Ascending aorta (tissue), 2 donors: ENCODE measurements at regions of chr3 and their contacts with region 1.

Region 1: GRCh38 chr3:11671648-11672100 is 28.0 kb upstream of the VGLL4 start:
- DNase-seq: no peak
- H3K4me3 ChIP-seq: peak overlapping the region in 1 of 2 donors; percentile 34
- H3K27ac ChIP-seq: peak overlapping the region; percentile 36 to 68
- H3K4me1 ChIP-seq: peaks cover 16 to 50% of the 10 kb centered on the region in 2 donors
- H3K27me3 ChIP-seq: no peaks in the 10 kb centered on the region
- CTCF ChIP-seq: no peak

Region 2: GRCh38 chr3:11367143-11367693 is 304.5 kb before region 1 on chr3:
- intact Hi-C with region 1: no loop called
- DNase-seq: peak in 1 of 2 donors; percentile 70
- H3K4me3 ChIP-seq: no peak overlapping the region
- H3K27ac ChIP-seq: peak overlapping the region; percentile 57 to 58
- H3K4me1 ChIP-seq: peaks cover 0 to 7% of the 10 kb centered on the region in 2 donors
- H3K27me3 ChIP-seq: no peaks in the 10 kb centered on the region
- CTCF ChIP-seq: no peak

Region 3: GRCh38 chr3:11719406-11720230 is 47.9 kb after region 1 on chr3:
- intact Hi-C with region 1: loop called (anchors 2 kb)
- DNase-seq: peak; percentile 16 to 83
- H3K4me3 ChIP-seq: peak overlapping the region; percentile 70 to 93
- H3K27ac ChIP-seq: peak overlapping the region; percentile 84 to 98
- H3K4me1 ChIP-seq: peaks cover 0 to 14% of the 10 kb centered on the region in 2 donors
- H3K27me3 ChIP-seq: no peaks in the 10 kb centered on the region
- CTCF ChIP-seq: no peak

Region 4: DNA sequence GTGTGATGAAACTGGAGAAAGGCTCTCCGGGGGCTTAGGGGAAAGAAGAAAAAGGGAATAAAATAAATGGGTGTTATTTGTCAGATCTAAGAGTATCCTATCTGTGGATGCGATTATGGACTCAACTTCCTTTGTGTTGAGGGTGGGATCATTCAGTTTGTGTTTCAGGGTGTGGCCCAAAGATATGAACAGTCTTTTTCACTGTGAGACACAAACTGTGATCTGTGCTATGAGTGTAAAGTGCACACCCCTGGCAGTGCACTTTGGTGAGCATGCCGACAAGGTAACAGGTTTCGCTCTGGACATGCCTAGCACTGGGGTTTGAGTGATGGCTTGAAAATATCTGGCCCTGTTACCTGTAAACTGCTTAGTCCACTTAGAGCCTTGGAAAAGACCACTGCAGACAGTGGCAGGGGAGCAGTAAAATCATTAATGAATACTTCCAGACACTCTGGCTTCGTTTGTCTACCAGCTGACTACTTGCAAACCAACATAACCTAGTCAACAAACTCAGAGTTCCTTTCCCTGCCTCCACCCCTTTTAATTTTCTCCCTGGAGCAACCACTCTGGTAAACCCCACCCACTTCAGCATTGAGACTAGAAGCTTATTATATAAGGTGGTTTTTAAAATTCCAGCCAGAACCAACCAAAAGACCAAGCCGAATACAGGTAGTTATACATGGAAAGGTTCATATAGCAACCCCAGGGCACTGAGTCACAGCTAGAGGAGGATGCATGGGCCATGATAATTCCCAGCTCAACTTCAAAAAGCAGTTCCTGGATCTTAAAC is 119.9 kb after region 1 on chr3:
- intact Hi-C with region 1: no loop called
- DNase-seq: no peak
- H3K4me3 ChIP-seq: no peak overlapping the region
- H3K27ac ChIP-seq: no peak overlapping the region
- H3K4me1 ChIP-seq: no peaks in the 10 kb centered on the region
- H3K27me3 ChIP-seq: no peaks in the 10 kb centered on the region
- CTCF ChIP-seq: no peak

Region 5: GRCh38 chr3:12175844-12176453 is 504.3 kb after region 1 on chr3:
- intact Hi-C with region 1: loop called (anchors 10 kb)
- DNase-seq: peak in 1 of 2 donors; percentile 82
- H3K4me3 ChIP-seq: no peak overlapping the region
- H3K27ac ChIP-seq: no peak overlapping the region
- H3K4me1 ChIP-seq: peaks cover 5 to 32% of the 10 kb centered on the region in 2 donors
- H3K27me3 ChIP-seq: no peaks in the 10 kb centered on the region
- CTCF ChIP-seq: peak; percentile 81 to 91 (median 84)